ENCODE measurements at regions of chr18 and their contacts with region 1.

Region 1: DNA sequence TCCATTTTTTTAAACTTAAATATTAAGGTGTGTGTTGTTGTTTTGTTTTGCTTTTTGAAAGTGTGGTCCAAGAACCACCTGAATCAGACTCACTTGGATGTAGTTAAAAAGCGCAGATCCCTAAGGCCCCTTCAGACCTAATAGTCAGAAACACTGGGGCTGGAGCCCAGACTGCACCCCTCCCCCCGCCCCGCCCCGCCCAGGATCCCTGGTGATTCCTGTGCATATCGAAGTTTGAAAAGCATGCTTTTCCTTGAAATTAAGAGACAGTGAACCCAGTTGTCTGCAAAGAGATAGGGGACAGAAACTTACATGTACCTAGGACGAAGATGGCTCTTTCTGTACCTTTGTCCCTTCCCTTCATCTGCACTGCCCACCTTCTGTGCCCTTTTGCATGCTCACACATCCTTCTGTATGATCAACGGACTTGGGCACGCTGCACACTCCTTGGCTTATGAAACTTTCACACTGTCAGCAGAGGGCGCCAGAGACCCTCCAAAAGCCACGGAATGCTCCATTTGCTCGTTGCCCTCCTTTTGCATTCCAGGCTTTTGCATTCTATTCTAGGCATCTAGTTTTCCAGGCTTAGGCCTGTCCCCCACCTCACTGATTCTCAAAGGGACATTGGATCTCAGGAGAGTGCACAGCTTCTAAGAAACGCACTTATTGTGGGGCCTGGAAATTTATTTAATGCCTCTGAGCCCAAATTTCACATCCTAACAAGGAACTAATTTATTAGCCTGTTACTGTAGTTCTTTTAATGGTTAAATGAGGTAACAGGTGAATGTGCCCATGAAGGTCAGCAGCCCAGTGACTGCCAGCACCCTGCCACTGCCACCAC is 32.8 kb upstream of the SLC14A1 start:
- DNase-seq: peak; percentile 57 to 89 (median 74)
- ATAC-seq: no peak
- H3K4me3 ChIP-seq: no peak overlapping the region
- H3K4me3 Mint-ChIP-seq: peak overlapping the region; percentile 57
- H3K27ac ChIP-seq: no peak overlapping the region
- H3K27ac Mint-ChIP-seq: no peak overlapping the region
- H3K4me1 ChIP-seq: peaks cover 45% of the 10 kb centered on the region
- H3K4me1 Mint-ChIP-seq: peaks cover 45% of the 10 kb centered on the region
- H3K27me3 ChIP-seq: no peaks in the 10 kb centered on the region
- H3K27me3 Mint-ChIP-seq: peaks cover 10% of the 10 kb centered on the region
- CTCF ChIP-seq: peak; percentile 86

Region 2: GRCh38 chr18:45608400-45608799 is 82.8 kb before region 1 on chr18:
- CTCF ChIA-PET with region 1: no interaction called
- POLR2A ChIA-PET with region 1: no interaction called
- intact Hi-C with region 1: no loop called
- DNase-seq: no peak
- ATAC-seq: no peak
- H3K4me3 ChIP-seq: no peak overlapping the region
- H3K4me3 Mint-ChIP-seq: no peak overlapping the region
- H3K27ac ChIP-seq: no peak overlapping the region
- H3K27ac Mint-ChIP-seq: no peak overlapping the region
- H3K4me1 ChIP-seq: no peaks in the 10 kb centered on the region
- H3K4me1 Mint-ChIP-seq: no peaks in the 10 kb centered on the region
- H3K27me3 ChIP-seq: no peaks in the 10 kb centered on the region
- H3K27me3 Mint-ChIP-seq: peaks cover 14% of the 10 kb centered on the region
- CTCF ChIP-seq: no peak

Region 3: DNA sequence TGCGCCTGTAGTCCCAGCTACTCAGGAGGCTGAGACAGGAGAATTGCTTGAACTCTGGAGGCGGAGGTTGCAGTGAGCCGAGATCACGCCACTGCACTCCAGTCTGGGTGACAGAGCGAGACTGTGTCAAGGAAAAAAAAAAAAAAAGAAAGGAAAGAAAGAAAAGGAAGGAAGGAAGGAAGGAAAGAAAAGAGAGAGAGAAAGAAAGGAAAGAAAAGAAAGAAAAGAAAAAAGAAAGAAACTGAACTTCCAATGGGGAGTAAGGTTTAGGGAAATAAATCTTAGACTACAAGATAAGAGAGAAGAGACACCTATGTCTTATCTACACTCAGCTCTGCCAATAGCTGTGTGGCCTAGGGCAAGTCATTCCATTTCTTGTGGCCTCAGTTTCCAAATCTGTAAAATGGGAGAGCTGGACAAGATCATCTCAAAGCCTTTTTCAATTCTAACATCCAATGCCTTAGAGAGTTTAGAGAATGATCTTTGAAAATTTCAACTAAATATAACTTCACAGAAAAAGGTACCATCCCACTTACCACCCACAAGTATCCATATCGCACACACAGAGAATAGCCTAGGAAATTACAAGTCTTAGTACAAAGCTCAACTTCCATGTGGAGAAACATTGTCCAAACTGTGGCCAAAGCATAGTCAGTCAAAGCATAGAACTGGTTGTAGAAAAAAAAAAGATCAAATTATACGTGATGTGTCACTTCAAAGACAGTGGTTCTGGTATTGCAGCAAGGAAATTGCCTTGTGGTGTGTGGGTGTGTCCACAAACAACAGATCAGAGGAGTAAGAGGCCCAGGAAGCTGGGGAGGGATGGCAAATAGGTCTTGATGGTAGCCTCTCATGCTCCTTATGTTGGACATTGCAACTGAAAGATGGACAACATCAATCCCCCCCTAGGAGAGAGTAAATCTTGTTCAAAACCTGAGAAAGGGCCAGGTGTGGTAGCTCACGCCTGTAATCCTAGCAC is 33.5 kb before region 1 on chr18:
- CTCF ChIA-PET with region 1: no interaction called
- POLR2A ChIA-PET with region 1: interaction called, 4 read pairs
- intact Hi-C with region 1: loop called in 1 of 2 experiments (anchors 5 kb)
- DNase-seq: peak in 7 of 14 experiments; percentile 12 to 81 (median 26)
- ATAC-seq: peak; percentile 82
- H3K4me3 ChIP-seq: no peak overlapping the region
- H3K4me3 Mint-ChIP-seq: peak overlapping the region; percentile 2
- H3K27ac ChIP-seq: no peak overlapping the region
- H3K27ac Mint-ChIP-seq: no peak overlapping the region
- H3K4me1 ChIP-seq: peaks cover 29% of the 10 kb centered on the region
- H3K4me1 Mint-ChIP-seq: peaks cover 39% of the 10 kb centered on the region
- H3K27me3 ChIP-seq: no peaks in the 10 kb centered on the region
- H3K27me3 Mint-ChIP-seq: no peaks in the 10 kb centered on the region
- CTCF ChIP-seq: no peak

Region 4: DNA sequence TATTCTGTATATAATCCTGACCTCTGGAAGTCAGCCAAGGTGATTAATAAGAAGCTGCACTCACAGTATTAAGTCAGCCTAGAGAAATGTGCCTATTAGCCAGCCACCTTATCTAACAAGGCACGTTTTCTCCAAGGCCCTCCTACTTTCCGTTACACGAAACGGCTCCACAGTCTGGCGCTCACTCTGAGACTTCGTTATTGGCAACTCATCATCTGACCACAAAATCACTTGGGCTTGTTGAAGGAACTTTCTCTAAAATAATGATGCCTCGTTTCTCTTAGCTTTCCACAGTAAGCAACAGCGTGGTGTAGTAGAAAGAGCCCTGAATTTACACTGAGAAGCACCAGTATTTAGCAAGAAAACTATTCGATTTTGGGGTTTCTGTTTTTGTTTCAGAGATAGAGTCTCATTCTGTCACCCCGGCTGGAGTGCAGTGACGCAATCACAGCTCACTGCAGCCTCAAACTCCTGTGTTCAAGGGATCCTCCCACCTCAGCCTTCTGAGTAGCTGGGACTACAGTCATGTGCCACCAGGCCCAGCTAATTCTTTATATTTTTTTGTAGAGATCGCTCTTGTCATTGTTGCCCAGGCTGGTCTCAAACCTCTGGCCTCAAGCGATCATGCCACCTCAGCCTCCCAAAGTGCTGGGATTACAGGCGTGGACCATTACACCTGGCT is 20.8 kb before region 1 on chr18:
- CTCF ChIA-PET with region 1: interaction called, 9 read pairs
- POLR2A ChIA-PET with region 1: interaction called, 73 read pairs
- intact Hi-C with region 1: loop called (anchors 1 to 2 kb)
- DNase-seq: peak in 8 of 14 experiments; percentile 24 to 73 (median 50)
- ATAC-seq: peak; percentile 75
- H3K4me3 ChIP-seq: peak overlapping the region; percentile 20
- H3K4me3 Mint-ChIP-seq: peak overlapping the region; percentile 60
- H3K27ac ChIP-seq: peak overlapping the region in 1 of 2 donors; percentile 55
- H3K27ac Mint-ChIP-seq: peak overlapping the region; percentile 88
- H3K4me1 ChIP-seq: peaks cover 52% of the 10 kb centered on the region
- H3K4me1 Mint-ChIP-seq: peaks cover 60% of the 10 kb centered on the region
- H3K27me3 ChIP-seq: no peaks in the 10 kb centered on the region
- H3K27me3 Mint-ChIP-seq: no peaks in the 10 kb centered on the region
- CTCF ChIP-seq: no peak

Region 5: DNA sequence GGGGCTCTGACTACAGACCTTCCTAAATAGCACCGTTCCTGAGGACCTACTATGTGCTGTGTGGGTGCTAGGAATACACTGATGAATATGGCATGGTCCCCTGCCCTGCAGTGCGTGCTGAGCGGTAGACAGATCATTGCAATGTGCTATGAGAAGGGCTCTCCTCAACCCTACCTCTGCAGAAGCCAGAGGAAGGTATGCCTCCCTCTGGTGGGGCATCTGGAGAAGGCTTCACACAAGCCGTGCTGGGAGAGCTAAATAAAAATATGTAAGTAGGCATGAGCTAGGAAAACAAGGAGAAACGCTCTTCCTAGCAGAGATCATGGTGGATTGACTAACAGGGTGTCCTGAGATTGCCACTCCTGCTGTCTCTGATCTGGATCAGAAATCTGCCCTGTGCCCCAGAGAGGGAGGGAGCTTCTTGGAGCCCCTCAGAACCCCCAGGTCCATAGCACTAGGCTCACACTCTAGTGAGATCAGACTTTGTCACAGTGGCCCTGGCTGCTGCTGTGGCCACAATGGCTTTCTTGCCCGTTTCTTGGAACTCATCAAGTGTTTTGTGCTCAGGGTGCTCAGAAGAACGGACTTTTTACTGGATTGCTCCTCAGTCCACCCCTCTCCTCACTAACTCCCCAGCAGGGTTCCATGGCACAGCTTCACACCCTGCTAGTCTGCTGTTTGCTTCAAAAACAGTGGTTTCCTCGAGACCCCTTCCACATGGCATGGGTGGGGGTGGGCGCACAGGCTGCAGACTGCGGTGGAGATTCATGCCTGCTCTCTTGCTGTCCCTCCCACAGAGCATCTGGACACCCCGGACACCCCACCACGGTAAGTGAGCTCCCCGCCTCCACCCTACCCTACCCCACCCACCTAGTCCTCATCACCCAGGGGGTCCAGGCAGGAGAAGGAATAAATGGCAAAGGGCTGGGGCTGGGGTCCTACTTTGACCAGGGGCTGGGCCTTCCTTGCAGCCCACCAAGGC is 148.5 kb after region 1 on chr18:
- CTCF ChIA-PET with region 1: no interaction called
- POLR2A ChIA-PET with region 1: no interaction called
- intact Hi-C with region 1: loop called in 1 of 2 experiments (anchors 5 kb)
- DNase-seq: peak in 6 of 14 experiments; percentile 13 to 66 (median 28)
- ATAC-seq: peak; percentile 81
- H3K4me3 ChIP-seq: no peak overlapping the region
- H3K4me3 Mint-ChIP-seq: peak overlapping the region; percentile 61
- H3K27ac ChIP-seq: no peak overlapping the region
- H3K27ac Mint-ChIP-seq: no peak overlapping the region
- H3K4me1 ChIP-seq: peaks cover 24% of the 10 kb centered on the region
- H3K4me1 Mint-ChIP-seq: peaks cover 14% of the 10 kb centered on the region
- H3K27me3 ChIP-seq: peaks cover 29 to 32% of the 10 kb centered on the region in 2 experiments
- H3K27me3 Mint-ChIP-seq: peaks cover 53% of the 10 kb centered on the region
- CTCF ChIP-seq: peak; percentile 17

Region 6: DNA sequence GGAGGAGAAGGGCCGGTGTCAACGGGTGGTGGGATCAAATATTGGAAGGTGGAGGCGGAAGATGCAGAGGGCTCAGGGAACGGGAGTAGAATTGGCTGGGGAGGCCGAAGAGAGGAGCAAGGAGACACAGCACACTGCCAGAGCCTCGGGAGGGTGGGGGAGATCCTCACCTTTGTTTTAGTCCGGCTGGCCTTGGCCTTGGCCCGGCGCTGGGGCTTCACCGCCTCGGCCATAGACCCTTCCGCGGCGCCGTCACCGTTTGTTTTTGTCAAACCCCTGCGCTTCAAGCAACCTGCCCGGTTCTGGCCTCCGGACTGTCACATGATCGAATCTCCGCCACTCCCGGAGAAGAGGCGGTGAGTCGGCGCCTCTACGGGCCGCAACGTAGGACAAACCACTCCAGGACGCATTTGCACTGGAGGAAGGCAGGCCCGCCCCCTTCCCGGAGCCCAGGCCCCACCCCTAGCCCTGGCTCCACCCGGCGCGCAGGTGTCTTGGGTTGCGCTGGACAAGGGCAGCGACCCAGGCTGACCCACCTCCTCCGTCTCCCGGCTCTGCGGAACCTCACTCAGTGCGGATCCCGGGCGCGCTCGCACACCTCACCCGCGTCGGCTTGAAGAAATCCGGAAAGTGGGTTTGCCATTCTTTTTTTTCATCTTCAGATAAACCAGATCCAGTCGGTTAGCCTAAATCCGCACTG is 276.0 kb after region 1 on chr18 and contains the start of gene EPG5:
- CTCF ChIA-PET with region 1: no interaction called
- POLR2A ChIA-PET with region 1: no interaction called
- intact Hi-C with region 1: loop called (anchors 2 to 5 kb)
- DNase-seq: peak; percentile 80 to 96 (median 87)
- ATAC-seq: peak; percentile 92
- H3K4me3 ChIP-seq: peak within 1 kb of the TSS; percentile 70
- H3K4me3 Mint-ChIP-seq: peak within 1 kb of the TSS; percentile 99
- H3K27ac ChIP-seq: peak within 1 kb of the TSS; percentile 65 to 68
- H3K27ac Mint-ChIP-seq: peak within 1 kb of the TSS; percentile 86
- H3K4me1 ChIP-seq: peaks cover 30% of the 10 kb centered on the region
- H3K4me1 Mint-ChIP-seq: peaks cover 50% of the 10 kb centered on the region
- H3K27me3 ChIP-seq: no peaks in the 10 kb centered on the region
- H3K27me3 Mint-ChIP-seq: no peaks in the 10 kb centered on the region
- CTCF ChIP-seq: no peak
- total RNA-seq, gene EPG5: 25.3 to 26.9 TPM